ENCODE measurements at regions of chr15 and their contacts with region 1.

Region 1: DNA sequence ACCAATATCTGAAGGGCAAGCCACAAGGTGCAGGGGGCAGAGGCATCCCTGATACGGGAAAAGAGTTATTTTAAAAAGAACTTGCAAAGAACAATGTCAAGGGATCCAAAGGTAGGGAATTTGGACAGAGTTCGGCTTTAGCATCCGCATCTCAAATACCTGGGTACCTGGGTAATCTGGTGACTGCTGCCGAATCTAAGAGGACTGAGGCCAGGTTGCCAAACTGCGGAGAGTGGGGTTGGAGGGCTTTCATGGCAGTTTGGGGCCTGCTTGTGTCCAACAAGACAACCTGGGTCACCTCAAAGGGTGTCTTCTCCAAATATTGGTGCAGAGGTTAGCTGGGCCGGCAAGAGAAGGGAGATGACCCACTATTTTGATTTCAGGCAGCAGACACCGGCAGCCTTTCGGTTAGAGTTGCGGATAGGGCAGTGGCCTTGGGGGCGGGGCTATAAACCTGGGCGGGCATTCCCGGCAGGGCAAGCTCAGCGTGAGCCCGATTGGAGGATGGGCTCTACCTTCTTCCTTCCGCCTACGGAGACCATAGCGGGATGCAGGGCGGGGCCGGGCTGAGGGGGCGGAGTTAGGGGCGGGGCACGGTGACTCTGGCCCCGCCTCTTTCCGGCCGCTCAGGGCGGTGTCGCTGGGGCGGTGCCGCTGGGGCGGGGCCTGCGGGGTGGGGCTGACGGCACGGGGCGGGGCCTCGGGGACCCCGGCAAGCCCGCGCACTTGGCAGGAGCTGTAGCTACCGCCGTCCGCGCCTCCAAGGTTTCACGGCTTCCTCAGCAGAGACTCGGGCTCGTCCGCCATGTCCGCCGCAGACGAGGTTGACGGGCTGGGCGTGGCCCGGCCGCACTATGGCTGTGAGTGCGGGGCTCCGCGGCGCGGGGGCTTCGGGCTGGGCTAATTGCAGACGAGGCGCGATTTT is at the start of gene IQGAP1:
- DNase-seq: peak; percentile 65
- H3K4me3 ChIP-seq: peak within 1 kb of the TSS; percentile 86
- CTCF ChIP-seq: no peak

Region 2: GRCh38 chr15:90233376-90234095 is 154.3 kb before region 1 on chr15 and contains the start of gene CIB1:
- CTCF ChIA-PET with region 1: no interaction called
- POLR2A ChIA-PET with region 1: no interaction called
- DNase-seq: peak; percentile 57
- H3K4me3 ChIP-seq: peak within 1 kb of the TSS; percentile 83
- CTCF ChIP-seq: peak; percentile 39

Region 3: DNA sequence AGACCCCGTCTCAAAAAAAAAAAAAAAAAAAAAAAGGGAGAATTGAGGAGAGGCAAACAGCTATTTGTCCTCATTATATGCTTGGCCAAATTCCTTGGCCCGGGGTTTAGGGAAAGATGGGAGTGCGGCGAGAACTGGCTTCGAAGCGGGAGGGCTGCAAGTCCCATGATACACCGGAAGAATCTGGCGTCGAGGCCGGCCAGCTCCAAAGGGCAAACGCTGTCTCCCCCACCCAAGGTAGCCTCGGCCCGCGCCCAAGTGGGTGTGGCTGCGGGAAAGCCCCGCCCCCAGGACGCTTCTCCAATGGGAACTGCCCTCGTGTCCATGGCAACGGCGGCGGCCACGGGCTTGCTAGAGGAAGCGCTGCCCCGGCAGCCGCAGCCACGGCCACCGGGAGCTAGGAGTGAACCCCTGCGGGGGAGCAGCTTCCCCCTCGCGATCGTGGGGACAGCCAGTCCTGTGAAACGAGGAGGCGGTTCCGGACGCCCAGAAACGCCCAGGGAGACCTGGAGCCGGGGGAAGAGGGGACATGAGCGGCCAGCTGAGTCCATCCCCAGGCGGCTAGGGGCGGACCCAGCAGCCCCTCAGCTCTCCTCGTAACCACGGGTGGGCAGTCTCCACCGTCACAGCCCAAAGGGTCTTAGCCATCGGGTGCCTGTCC is 138.5 kb before region 1 on chr15 and contains the start of gene TTLL13:
- CTCF ChIA-PET with region 1: no interaction called
- POLR2A ChIA-PET with region 1: no interaction called
- DNase-seq: peak; percentile 12
- H3K4me3 ChIP-seq: peak within 1 kb of the TSS; percentile 70
- CTCF ChIP-seq: no peak

Region 4: GRCh38 chr15:90362936-90363212 is 24.9 kb before region 1 on chr15:
- CTCF ChIA-PET with region 1: interaction called, 3 read pairs
- POLR2A ChIA-PET with region 1: interaction called, 13 read pairs
- DNase-seq: peak; percentile 71
- H3K4me3 ChIP-seq: no peak overlapping the region
- CTCF ChIP-seq: no peak

Region 5: DNA sequence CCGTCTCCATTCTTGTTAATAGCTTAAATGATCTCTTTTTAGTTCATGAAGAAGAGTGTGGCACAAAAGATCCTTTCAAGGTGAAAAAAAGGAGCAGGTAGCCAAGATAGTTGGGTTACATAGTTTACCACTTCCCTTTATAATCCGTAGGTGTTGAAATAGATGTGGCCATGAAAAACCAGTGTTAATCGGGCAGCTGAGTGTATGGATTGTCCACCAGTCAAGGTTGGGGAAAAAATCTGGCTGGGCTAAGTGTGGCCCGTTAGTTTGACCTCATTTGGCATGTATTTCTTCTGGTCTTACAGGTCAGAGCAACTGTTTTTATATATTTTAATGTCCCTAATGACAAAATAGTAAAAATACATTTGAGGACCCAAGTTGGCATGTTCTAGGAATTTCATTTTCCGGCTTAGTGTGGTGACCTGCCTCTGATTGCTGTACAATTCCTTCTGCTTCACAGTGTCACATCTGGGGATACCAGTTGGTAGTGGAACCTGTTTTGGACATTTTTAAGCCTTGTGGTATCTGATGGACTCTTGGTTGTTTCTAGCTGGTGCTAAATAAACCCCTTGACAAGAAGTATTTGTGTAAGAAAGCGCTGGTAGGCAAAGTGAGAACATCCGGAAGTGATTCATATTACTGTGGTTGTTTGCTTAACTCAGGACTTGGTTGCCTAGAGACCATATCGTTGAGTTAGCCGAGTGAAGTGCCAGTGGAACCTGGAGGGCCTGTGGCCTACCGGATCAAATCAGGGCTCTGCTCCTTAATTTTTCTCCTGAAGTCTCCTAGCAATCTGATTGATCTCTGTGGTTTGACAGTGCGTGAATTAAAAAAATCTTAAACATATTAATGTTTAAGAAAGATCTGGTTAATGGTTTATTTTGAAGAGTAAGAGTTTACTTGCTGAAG is 12.9 kb after region 1 on chr15:
- CTCF ChIA-PET with region 1: interaction called, 11 read pairs
- POLR2A ChIA-PET with region 1: interaction called, 10 read pairs
- DNase-seq: peak; percentile 88
- H3K4me3 ChIP-seq: no peak overlapping the region
- CTCF ChIP-seq: no peak

Measured in AG04449 (cell line).